Breast epithelium (tissue), 4 donors: ENCODE measurements at regions of chr3 and their contacts with region 1.

Region 1: GRCh38 chr3:182782149-182782548 is 11.2 kb upstream of the ATP11B start:
- DNase-seq: no peak
- H3K4me3 ChIP-seq: no peak overlapping the region
- H3K27ac ChIP-seq: no peak overlapping the region
- H3K4me1 ChIP-seq: no peaks in the 10 kb centered on the region
- H3K27me3 ChIP-seq: peaks cover 0 to 4% of the 10 kb centered on the region in 2 donors
- CTCF ChIP-seq: no peak
- POLR2A ChIP-seq: no peak

Region 2: DNA sequence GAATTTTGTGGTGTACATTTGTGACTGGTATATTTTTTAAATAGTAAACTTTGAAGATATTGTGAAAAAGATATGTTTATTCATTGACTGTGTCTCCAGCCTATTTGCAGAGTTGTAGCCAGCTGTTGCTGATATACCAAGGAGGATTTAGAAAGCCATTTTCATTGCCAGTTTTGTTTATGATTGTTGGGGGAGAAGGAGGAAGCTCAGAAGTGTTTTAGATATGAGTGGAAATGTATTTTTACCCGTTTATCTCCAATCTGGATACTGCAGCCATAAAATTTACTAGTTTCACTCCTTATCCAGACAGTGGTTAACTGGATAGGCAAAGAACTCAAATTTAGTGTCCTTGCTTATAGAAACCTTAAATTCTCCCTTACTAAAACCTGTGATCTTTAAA is 30.0 kb after region 1 on chr3:
- intact Hi-C with region 1: loop called (anchors 2 kb)
- DNase-seq: no peak
- H3K4me3 ChIP-seq: no peak overlapping the region
- H3K27ac ChIP-seq: no peak overlapping the region
- H3K4me1 ChIP-seq: no peaks in the 10 kb centered on the region
- H3K27me3 ChIP-seq: no peaks in the 10 kb centered on the region
- CTCF ChIP-seq: no peak
- POLR2A ChIP-seq: no peak

Region 3: DNA sequence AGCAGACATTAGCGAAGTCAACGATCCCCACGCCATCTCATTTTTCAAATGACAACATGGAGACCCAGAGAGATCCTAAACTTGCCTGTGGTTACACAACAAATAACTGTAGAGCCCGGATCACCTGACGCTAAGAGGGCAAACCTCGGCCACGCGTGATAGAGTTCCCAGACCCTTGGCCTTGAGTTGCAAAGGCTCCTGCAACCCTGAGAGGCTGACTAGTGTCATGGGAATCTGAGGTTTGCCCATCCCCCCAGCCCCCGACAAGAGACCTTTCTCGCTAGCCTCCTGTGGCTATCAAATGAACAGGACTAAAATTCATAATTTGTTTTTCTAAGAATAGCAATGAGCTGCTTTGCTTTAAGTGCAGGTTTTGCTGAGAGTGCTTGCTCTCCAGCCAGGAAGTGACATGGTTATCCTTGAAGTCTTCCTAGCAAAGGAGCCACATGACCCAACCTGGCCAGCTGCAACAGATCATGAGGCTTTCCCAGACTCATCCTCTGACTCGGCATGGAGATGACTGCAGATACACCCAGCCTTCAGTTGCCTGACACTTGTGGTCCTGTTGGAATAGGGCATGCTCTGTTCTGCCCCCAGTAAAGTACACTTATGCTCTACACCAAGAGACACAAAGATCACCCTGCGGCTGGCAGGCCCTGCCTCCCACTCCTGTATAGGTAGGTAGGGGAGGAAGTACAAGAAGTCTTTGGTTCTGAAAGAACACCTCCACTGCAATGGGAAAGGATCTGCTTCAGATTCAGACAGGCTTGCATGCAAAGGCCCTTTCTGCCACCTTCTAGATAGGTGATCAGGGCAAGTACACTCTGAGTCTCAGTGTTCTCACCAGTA is 610.3 kb after region 1 on chr3:
- intact Hi-C with region 1: no loop called
- DNase-seq: no peak
- H3K4me3 ChIP-seq: no peak overlapping the region
- H3K27ac ChIP-seq: no peak overlapping the region
- H3K4me1 ChIP-seq: no peaks in the 10 kb centered on the region
- H3K27me3 ChIP-seq: no peaks in the 10 kb centered on the region
- CTCF ChIP-seq: no peak
- POLR2A ChIP-seq: no peak